ENCODE measurements at regions of chr17 and their contacts with region 1.

Region 1: GRCh38 chr17:10844621-10845387 is 6.9 kb upstream of the PIRT start:
- DNase-seq: peak; percentile 87
- CTCF ChIP-seq: peak; percentile 96

Region 2: GRCh38 chr17:10646392-10646990 is 198.3 kb before region 1 on chr17:
- in situ Hi-C with region 1: loop called (anchors 10 kb)
- DNase-seq: peak; percentile 75
- CTCF ChIP-seq: peak; percentile 87